ENCODE measurements at regions of chr7 and their contacts with region 1.

Region 1: DNA sequence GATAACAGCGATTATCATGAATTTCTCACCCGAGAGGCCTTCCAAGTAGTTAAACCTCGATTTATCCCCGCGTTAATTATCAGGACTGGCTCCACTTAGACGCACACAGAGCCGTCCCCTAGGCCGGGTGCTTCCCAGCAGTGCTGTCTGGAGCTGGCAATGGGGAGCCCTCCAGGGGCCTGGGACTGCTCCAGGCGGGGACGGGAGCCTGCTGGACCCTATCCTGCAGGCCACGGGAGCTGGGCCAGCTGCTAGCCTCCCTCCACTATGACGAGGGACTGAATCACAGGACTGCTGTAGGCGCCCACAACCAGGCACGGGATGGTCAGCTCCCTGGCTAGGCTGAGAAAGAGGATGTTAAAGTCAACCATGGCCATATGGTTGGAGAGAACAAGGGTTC is 229.1 kb downstream of the ELFN1 start:
- DNase-seq: peak; percentile 77
- H3K4me3 ChIP-seq: no peak overlapping the region
- H3K27ac ChIP-seq: peak overlapping the region in 1 of 2 experiments; percentile 83; a peak in 1 of 4 replicates
- H3K4me1 ChIP-seq: peaks cover 0 to 56% of the 10 kb centered on the region in 2 experiments; a peak in 1 of 4 replicates
- H3K27me3 ChIP-seq: no peaks in the 10 kb centered on the region
- CTCF ChIP-seq: no peak
- EP300 ChIP-seq: no peak
- RAD21 ChIP-seq: peak; percentile 5; the same call in 1 of the 2 replicates

Region 2: DNA sequence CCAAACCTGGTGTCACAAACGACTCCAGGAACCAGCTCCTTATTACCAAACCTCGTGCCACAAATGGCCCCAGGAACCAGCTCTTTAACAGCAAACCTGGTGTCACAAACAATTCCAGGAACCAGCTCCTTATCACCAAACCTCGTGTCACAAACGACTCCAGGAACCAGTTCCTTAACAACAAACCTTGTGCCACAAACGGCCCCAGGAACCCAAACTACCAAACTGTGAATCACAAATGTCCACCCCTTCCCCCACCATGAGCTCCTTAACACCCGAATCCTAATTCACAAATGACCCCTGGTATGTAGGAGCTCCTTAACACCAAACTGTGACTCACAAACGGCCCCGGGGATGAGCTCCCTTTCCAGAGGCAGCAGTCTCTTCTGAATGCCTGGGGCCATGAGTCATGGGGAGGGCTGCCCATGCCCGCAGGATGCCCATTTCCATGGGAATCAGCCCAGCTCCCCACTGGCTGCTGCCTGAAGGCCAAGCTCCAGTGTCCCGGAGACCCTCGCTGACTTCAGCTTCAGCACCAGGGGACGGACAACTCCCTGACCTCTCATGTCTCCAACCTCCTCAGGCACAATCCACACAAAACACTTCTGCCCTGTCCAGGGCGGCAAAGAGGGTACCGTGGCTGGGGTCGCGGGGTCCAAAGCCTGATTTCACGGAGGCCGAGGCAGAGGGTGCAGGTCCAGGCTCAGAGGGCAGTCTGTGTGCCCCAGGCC is 16.0 kb before region 1 on chr7:
- CTCF ChIA-PET with region 1: interaction called, 24 read pairs
- POLR2A ChIA-PET with region 1: interaction called, 3 read pairs
- DNase-seq: no peak
- H3K4me3 ChIP-seq: no peak overlapping the region
- H3K27ac ChIP-seq: peak overlapping the region in 1 of 2 experiments; percentile 50; a peak in 3 of 4 replicates
- H3K4me1 ChIP-seq: peaks cover 16 to 21% of the 10 kb centered on the region in 2 experiments; a peak in 3 of 4 replicates
- H3K27me3 ChIP-seq: no peaks in the 10 kb centered on the region
- CTCF ChIP-seq: no peak
- EP300 ChIP-seq: no peak; a peak in 1 of 4 replicates
- RAD21 ChIP-seq: no peak

Measured in SK-N-SH (cell line).